ENCODE measurements at regions of chr20 and their contacts with region 1.

Region 1: GRCh38 chr20:47379433-47380150 is 23.1 kb upstream of the ZMYND8 start:
- DNase-seq: no peak
- H3K4me3 Mint-ChIP-seq: no peak overlapping the region
- H3K27ac Mint-ChIP-seq: peak overlapping the region; percentile 40
- H3K4me1 Mint-ChIP-seq: peaks cover 36% of the 10 kb centered on the region
- H3K27me3 Mint-ChIP-seq: no peaks in the 10 kb centered on the region

Region 2: DNA sequence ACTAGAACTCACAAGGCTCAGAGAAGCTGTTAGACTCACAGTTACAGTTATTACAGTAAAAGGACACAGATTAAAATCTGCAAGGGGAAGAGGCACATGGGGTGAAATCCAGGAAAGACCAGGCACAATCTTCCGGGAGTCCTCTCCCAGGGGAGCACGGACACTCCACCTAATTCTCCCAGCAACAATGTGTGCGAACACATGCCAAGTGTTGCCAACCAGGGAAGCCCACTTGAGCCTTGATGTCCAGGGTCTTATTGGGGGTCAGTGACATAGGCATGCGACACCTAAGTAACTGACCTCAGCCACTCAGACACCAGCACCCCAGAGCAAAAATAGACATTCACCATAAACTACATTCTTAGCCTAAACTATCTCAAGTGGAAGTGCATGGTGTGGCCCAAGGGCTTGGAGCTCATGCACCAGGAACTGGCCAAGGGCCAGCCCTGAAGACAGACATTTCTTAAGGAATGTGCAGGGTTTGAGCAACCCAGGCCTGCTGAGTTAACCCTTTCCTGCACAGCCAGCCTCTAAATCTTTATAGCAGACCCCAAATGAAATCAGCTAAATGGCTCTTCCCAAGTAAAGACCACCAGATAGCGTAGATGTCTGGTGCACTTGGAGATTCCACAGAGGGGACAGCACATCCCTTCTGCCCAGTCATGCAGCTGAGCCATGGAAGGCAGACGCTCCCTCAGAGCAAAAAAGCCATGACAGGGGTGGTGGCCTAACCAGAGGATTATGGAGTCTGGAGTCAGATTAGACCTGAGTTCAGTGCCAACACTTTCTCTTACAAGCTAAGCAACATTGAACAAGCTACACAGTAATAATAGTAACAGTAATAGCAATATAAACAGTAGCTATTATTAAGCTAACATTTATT is 245.8 kb before region 1 on chr20:
- CTCF ChIA-PET with region 1: no interaction called
- POLR2A ChIA-PET with region 1: no interaction called
- DNase-seq: no peak
- H3K4me3 Mint-ChIP-seq: no peak overlapping the region
- H3K27ac Mint-ChIP-seq: no peak overlapping the region
- H3K4me1 Mint-ChIP-seq: no peaks in the 10 kb centered on the region
- H3K27me3 Mint-ChIP-seq: peaks cover 18% of the 10 kb centered on the region

Region 3: GRCh38 chr20:47213966-47214365 is 165.6 kb before region 1 on chr20:
- CTCF ChIA-PET with region 1: interaction called, 16 read pairs
- POLR2A ChIA-PET with region 1: no interaction called
- DNase-seq: no peak
- H3K4me3 Mint-ChIP-seq: no peak overlapping the region
- H3K27ac Mint-ChIP-seq: no peak overlapping the region
- H3K4me1 Mint-ChIP-seq: no peaks in the 10 kb centered on the region
- H3K27me3 Mint-ChIP-seq: no peaks in the 10 kb centered on the region

Region 4: DNA sequence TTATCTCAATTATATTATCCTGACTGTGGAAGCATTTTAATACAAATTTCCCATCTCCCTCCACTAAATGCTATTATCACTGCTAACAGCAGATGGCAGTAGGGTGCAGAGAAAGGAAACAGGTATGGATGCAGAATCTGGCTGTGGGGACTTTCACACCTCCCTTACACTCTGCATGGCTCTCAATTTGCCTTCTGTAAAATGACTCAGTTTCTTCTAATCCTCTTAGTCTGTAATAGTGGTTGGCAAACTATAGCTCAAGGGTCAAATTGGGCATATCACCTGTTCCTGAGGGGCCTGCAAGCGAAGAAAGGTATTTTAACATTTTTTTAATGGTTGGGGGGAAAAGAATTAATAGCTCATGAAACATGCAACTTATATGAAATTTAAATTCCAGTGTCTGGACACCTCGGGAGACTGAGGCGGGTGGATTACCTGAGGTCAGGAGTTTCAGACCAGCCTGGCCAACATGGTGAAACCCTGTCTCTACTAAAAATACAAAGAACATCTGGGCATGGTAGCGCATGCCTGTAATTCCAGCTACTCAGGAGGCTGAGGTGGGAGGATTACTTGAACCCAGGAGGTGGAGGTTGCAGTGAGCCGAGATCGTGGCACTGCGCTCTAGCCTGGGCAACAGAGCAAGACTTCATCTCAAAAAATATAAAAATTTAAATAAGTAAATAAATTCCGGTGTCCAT is 106.5 kb before region 1 on chr20:
- CTCF ChIA-PET with region 1: interaction called, 441 read pairs
- POLR2A ChIA-PET with region 1: interaction called, 66 read pairs
- DNase-seq: peak; percentile 45
- H3K4me3 Mint-ChIP-seq: no peak overlapping the region
- H3K27ac Mint-ChIP-seq: peak overlapping the region; percentile 33
- H3K4me1 Mint-ChIP-seq: peaks cover 38% of the 10 kb centered on the region
- H3K27me3 Mint-ChIP-seq: no peaks in the 10 kb centered on the region

Region 5: DNA sequence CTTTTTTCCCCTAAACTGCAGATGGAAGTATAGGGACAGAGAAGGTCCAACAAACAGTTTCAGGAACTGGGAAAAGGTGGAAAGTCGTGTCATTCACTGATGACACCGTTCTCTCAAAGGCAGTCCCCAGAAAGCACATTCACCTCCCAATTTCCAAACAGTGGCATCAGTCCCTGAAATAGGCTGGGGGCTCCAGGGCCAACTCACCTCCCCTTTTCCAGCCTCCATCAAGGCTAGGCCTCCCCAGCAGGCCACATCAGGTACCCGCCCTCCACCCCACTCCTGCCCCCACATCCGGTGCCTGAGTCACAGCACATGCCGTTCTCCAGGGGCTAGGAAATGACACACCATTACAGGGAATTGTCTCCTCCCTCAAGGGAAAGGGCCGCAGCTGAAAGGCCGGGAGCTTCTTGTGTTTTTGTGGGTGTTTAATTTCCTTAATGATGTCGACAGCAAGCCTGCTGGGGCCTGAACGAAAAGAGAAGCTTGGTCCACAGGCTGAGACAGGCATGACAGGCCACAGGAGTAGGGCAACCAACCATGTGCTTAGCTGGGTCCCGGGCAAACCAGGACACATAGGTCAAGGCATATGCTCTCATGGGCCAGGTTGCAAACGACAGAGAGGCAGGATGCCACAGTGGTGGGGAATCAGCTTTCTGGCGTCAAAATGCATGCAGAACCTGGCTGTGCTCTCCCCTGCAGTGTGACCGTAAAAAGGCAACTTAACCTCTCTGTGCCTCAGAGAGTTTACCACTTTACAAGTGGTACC is 62.3 kb before region 1 on chr20:
- CTCF ChIA-PET with region 1: interaction called, 14 read pairs
- POLR2A ChIA-PET with region 1: no interaction called
- DNase-seq: peak; percentile 68
- H3K4me3 Mint-ChIP-seq: peak overlapping the region; percentile 48
- H3K27ac Mint-ChIP-seq: peak overlapping the region; percentile 56
- H3K4me1 Mint-ChIP-seq: peaks cover 63% of the 10 kb centered on the region
- H3K27me3 Mint-ChIP-seq: no peaks in the 10 kb centered on the region

Region 6: GRCh38 chr20:47501483-47502270 is 122.1 kb after region 1 on chr20 and contains the start of gene NCOA3:
- CTCF ChIA-PET with region 1: interaction called, 25 read pairs
- POLR2A ChIA-PET with region 1: interaction called, 8 read pairs
- DNase-seq: peak; percentile 95
- H3K4me3 Mint-ChIP-seq: peak within 1 kb of the TSS; percentile 94
- H3K27ac Mint-ChIP-seq: peak within 1 kb of the TSS; percentile 97
- H3K4me1 Mint-ChIP-seq: peaks cover 59% of the 10 kb centered on the region
- H3K27me3 Mint-ChIP-seq: no peaks in the 10 kb centered on the region
- total RNA-seq, gene NCOA3: 81.0 to 83.1 TPM

Region 7: DNA sequence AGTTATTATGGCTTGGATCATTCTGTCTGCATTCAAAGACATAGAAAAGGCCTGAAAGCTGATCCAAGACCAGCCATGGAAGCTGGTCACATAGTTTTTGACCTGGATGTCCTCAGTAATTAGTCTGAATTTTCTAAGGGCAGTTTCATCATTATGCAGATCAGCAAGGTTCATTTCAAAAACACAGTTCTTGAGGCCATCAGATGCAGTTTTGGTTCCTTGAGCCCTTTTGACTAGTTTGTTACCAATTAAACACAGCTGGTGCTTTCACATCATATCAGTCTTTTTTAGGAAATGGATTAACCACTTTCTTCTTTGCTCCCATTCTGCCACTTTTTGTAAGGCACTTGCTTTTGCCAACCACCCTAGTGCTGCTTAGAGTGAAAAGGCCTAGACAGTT is 251.5 kb after region 1 on chr20:
- CTCF ChIA-PET with region 1: interaction called, 10 read pairs
- POLR2A ChIA-PET with region 1: no interaction called
- DNase-seq: no peak
- H3K4me3 Mint-ChIP-seq: no peak overlapping the region
- H3K27ac Mint-ChIP-seq: no peak overlapping the region
- H3K4me1 Mint-ChIP-seq: peaks cover 1% of the 10 kb centered on the region
- H3K27me3 Mint-ChIP-seq: no peaks in the 10 kb centered on the region